ENCODE measurements at regions of chr21 and their contacts with region 1.

Region 1: GRCh38 chr21:38269576-38269936 is 12.8 kb downstream of the KCNJ15 start:
- DNase-seq: peak; percentile 87
- ATAC-seq: peak; percentile 94
- H3K4me3 ChIP-seq: peak overlapping the region; percentile 32; the same call in 1 of the 2 replicates
- H3K27ac ChIP-seq: peak overlapping the region; percentile 96
- H3K4me1 ChIP-seq: peaks cover 40% of the 10 kb centered on the region
- H3K27me3 ChIP-seq: no peaks in the 10 kb centered on the region
- CTCF ChIP-seq: no peak
- EP300 ChIP-seq: peak; percentile 76 to 79; a peak in 2 of 4 replicates
- POLR2A ChIP-seq: no peak
- RAD21 ChIP-seq: no peak

Region 2: GRCh38 chr21:38289705-38290485 is 20.3 kb after region 1 on chr21:
- CTCF ChIA-PET with region 1: interaction called, 11 read pairs
- POLR2A ChIA-PET with region 1: no interaction called
- RAD21 ChIA-PET with region 1: interaction called, 6 read pairs
- SMC1A ChIA-PET with region 1: interaction called, 57 read pairs
- in situ Hi-C with region 1: no loop called
- intact Hi-C with region 1: loop called (anchors 2 kb)
- DNase-seq: no peak
- ATAC-seq: peak; percentile 64
- H3K4me3 ChIP-seq: no peak overlapping the region
- H3K27ac ChIP-seq: no peak overlapping the region
- H3K4me1 ChIP-seq: no peaks in the 10 kb centered on the region
- H3K27me3 ChIP-seq: no peaks in the 10 kb centered on the region
- CTCF ChIP-seq: no peak
- EP300 ChIP-seq: no peak
- POLR2A ChIP-seq: no peak
- RAD21 ChIP-seq: no peak

Region 3: DNA sequence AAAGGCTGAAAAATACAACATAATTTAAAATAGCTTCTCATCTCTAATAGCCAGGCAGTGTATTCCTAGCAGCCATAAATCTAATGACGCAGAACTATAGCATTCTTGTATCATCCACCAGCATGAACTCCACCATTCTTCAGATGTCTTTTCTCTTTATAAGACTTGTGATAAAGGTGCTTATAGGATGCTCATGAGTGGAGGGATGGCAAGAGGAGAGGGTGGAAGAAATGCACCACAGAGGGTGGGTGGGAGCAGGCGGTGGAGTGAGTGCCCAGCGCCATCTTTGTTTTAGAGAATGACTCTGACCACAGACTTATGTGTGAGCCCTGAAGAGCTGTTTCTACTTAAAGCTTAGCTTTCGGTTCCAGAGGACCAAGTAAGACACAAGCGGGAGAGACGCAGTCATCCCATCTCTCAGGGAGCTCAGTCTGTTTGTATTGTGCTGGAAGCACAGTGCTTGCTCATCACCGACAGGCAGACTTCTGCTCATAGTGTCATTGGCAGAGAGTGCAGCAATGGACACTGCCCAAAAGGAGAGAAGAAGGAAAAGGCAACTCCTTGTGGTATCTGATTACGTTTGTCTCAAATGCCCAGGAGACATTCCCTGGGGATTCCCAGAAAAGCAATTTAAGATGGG is 52.9 kb after region 1 on chr21:
- CTCF ChIA-PET with region 1: no interaction called
- POLR2A ChIA-PET with region 1: no interaction called
- RAD21 ChIA-PET with region 1: no interaction called
- SMC1A ChIA-PET with region 1: no interaction called
- in situ Hi-C with region 1: no loop called
- intact Hi-C with region 1: no loop called
- DNase-seq: no peak
- ATAC-seq: no peak
- H3K4me3 ChIP-seq: no peak overlapping the region
- H3K27ac ChIP-seq: no peak overlapping the region
- H3K4me1 ChIP-seq: no peaks in the 10 kb centered on the region
- H3K27me3 ChIP-seq: no peaks in the 10 kb centered on the region
- CTCF ChIP-seq: no peak
- EP300 ChIP-seq: no peak
- POLR2A ChIP-seq: no peak
- RAD21 ChIP-seq: no peak

Region 4: GRCh38 chr21:38434913-38435533 is 165.5 kb after region 1 on chr21:
- CTCF ChIA-PET with region 1: no interaction called
- POLR2A ChIA-PET with region 1: no interaction called
- RAD21 ChIA-PET with region 1: no interaction called
- SMC1A ChIA-PET with region 1: no interaction called
- in situ Hi-C with region 1: no loop called
- intact Hi-C with region 1: no loop called
- DNase-seq: no peak
- ATAC-seq: no peak
- H3K4me3 ChIP-seq: no peak overlapping the region
- H3K27ac ChIP-seq: no peak overlapping the region
- H3K4me1 ChIP-seq: no peaks in the 10 kb centered on the region
- H3K27me3 ChIP-seq: no peaks in the 10 kb centered on the region
- CTCF ChIP-seq: no peak
- EP300 ChIP-seq: no peak
- POLR2A ChIP-seq: no peak
- RAD21 ChIP-seq: no peak

Measured in GM12878 (cell line).